ENCODE measurements at regions of chr3 and their contacts with region 1.

Region 1: DNA sequence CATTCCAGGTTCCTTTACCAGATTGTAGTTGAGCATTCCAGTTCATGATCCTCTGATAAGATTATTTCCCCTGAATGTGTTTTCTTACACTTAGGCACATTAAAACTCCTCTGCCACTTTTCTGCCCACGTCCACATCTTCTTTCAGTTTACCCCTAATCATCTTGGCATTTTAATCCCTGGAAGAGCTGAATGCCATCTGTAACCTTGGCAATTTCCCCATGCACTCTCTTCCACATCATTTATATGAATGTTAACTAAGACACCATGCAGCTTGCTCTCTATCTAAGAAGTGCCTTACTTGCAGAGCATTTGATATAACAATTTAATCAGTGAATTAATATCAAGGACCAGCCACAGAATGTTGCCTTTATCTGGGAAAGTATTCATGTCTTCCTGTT is 25.8 kb downstream of the TIMP4 start:
- DNase-seq: no peak
- ATAC-seq: no peak
- H3K4me3 ChIP-seq: no peak overlapping the region
- H3K27ac ChIP-seq: no peak overlapping the region
- H3K4me1 ChIP-seq: no peaks in the 10 kb centered on the region
- H3K27me3 ChIP-seq: no peaks in the 10 kb centered on the region
- CTCF ChIP-seq: no peak
- POLR2A ChIP-seq: no peak

Region 2: GRCh38 chr3:11719406-11720230 is 413.3 kb before region 1 on chr3:
- intact Hi-C with region 1: no loop called
- DNase-seq: peak; percentile 95 to 97 (median 96)
- ATAC-seq: peak; percentile 88
- H3K4me3 ChIP-seq: peak overlapping the region; percentile 56 to 77
- H3K27ac ChIP-seq: peak overlapping the region; percentile 96 to 99 (median 96)
- H3K4me1 ChIP-seq: peaks cover 44% of the 10 kb centered on the region
- H3K27me3 ChIP-seq: no peaks in the 10 kb centered on the region
- CTCF ChIP-seq: no peak
- POLR2A ChIP-seq: peak; percentile 76 to 92 (median 81)

Region 3: DNA sequence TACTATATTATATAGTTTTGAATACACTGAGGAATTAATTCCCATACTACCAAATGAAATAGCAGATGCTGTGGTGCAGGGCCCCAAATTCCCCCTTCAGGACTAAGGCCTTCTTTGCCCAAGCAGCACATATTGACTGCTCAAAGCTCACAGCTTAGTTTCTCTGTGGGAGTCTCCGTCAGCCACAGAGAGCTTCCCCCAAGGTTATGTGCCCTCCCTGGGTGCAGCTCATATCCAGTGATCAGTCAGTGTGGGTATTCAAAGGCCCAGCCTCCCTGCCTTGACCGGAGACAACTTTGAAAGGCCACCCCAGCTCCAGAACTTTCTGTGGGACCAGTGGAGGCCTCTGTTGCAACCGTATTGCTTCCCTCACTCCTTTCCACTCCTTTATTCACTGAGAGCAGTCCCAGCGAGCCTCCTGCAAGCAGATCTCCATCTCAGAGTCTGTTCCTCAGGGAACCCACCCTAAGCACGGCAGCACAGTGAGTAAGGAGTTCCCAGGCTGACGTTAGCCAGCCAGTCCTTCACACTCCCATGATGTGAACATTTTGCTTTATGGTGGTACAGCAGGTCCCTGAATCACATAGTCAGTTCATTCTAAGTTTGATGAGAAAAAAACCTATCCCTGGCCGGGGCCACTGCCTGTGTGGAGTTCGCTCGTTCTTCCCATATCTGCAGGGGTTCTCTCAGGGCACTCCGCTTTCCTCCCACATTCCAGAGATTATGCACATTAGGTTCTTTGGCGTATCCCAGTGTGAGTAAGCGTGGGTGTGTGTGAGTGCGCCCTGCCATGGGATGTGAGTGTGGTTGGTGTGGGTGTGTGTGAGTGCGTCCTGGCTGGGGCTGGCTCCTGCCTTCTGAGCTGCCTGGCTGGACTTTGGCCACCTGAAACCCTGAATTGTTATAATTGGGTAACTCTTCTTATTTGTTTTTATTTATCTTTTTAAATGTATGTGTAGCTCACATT is 91.6 kb after region 1 on chr3:
- intact Hi-C with region 1: no loop called
- DNase-seq: no peak
- ATAC-seq: no peak
- H3K4me3 ChIP-seq: no peak overlapping the region
- H3K27ac ChIP-seq: no peak overlapping the region
- H3K4me1 ChIP-seq: no peaks in the 10 kb centered on the region
- H3K27me3 ChIP-seq: no peaks in the 10 kb centered on the region
- CTCF ChIP-seq: no peak
- POLR2A ChIP-seq: no peak

Region 4: DNA sequence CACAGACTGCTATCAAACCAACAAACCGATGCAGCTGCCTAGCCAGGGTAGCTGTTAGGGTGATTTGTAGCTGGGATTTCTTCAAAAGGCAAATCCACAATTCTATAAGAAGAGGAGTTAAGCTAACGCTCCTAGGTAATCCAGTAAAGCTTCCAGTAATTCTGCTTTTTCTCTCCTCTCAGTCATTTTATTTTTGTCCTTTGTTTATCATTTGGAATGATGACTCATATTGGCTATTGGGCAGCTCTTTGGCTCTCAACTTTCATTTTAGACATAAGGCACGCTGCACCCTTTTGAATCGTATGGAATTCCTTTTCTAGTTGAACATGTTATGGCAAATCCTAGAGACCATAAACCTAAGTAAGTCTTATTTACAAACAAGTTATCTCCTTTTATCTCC is 102.8 kb after region 1 on chr3:
- intact Hi-C with region 1: no loop called
- DNase-seq: no peak
- ATAC-seq: no peak
- H3K4me3 ChIP-seq: no peak overlapping the region
- H3K27ac ChIP-seq: no peak overlapping the region
- H3K4me1 ChIP-seq: no peaks in the 10 kb centered on the region
- H3K27me3 ChIP-seq: no peaks in the 10 kb centered on the region
- CTCF ChIP-seq: no peak
- POLR2A ChIP-seq: no peak

Region 5: GRCh38 chr3:12471243-12471651 is 338.4 kb after region 1 on chr3:
- intact Hi-C with region 1: loop called (anchors 5 kb)
- DNase-seq: no peak
- ATAC-seq: no peak
- H3K4me3 ChIP-seq: no peak overlapping the region
- H3K27ac ChIP-seq: no peak overlapping the region
- H3K4me1 ChIP-seq: no peaks in the 10 kb centered on the region
- H3K27me3 ChIP-seq: no peaks in the 10 kb centered on the region
- CTCF ChIP-seq: no peak
- POLR2A ChIP-seq: no peak

Region 6: GRCh38 chr3:12884186-12884680 is 751.4 kb after region 1 on chr3:
- intact Hi-C with region 1: no loop called
- DNase-seq: no peak
- ATAC-seq: no peak
- H3K4me3 ChIP-seq: no peak overlapping the region
- H3K27ac ChIP-seq: no peak overlapping the region
- H3K4me1 ChIP-seq: peaks cover 1% of the 10 kb centered on the region
- H3K27me3 ChIP-seq: no peaks in the 10 kb centered on the region
- CTCF ChIP-seq: no peak
- POLR2A ChIP-seq: no peak